GM10248 (cell line): ENCODE measurements at regions of chr17 and their contacts with region 1.

Region 1: GRCh38 chr17:45021607-45022287 is 29.7 kb downstream of the DCAKD start:
- DNase-seq: peak; percentile 91
- CTCF ChIP-seq: peak; percentile 79

Region 2: GRCh38 chr17:44919885-44920564 is 101.7 kb before region 1 on chr17:
- CTCF ChIA-PET with region 1: interaction called, 196 read pairs
- POLR2A ChIA-PET with region 1: no interaction called
- DNase-seq: peak; percentile 90
- CTCF ChIP-seq: peak; percentile 92

Region 3: DNA sequence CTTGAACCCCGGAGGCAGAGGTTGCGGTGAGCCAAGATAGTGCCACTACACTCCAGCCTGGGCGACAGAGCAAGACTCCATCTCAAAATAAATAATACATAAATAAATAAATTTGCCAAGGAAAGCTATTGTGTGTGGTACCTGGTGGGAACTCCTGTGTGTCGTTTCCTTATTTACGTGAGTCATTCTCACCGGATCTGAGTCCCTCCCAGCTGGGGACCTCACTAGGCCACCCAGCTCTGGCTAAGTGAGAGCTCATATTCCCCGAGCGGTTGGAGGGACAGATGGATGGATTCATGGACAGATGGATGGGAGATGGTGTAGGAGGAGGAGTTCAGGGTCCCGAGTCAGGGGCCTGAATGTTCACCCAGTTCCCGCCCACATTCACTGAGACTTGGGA is 30.8 kb before region 1 on chr17:
- CTCF ChIA-PET with region 1: interaction called, 10 read pairs
- POLR2A ChIA-PET with region 1: no interaction called
- DNase-seq: no peak
- CTCF ChIP-seq: no peak

Region 4: DNA sequence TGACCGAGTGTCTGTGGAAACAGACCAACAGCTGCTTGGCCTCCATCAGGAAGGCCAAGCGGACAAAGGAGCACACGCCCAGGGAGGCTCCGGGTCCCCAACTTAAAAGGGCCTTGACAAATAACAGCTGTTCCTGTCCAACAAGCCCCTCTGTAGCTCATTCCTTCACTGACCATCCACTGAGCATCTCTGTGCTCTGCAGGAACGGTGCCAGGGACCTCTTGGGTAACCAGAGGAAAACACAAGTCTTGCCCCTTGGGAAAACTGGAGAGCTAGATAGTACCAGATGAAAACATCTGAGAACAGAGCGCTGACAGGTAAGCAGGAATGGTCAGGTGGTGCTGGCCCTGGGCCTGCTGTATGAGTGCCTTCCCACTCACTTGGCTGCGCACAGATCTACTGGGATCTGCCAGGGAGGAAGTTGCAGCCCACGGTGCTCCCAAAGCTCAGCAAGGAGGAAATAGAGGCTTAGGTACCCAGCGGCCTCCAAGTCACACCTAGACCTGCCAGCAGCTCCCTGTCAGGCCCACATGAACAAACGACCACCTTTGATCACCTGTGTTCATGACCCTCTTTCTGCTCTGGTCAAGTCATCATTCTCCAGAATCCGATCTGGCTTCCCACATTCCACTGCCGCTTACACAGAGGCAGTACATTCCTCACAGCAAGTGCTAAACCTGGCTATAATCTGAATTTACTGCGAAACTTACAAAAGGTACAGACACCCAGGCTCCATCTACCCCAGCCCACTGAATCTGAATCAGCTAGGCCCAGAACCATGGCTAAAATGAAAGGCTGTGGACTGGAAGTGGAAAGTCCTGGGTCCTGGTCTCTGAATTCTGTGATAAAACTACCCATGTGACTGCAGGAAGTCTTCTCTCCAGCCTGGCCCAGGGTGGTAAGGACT is 17.2 kb after region 1 on chr17:
- CTCF ChIA-PET with region 1: interaction called, 27 read pairs
- POLR2A ChIA-PET with region 1: no interaction called
- DNase-seq: no peak
- CTCF ChIP-seq: no peak

Region 5: GRCh38 chr17:45073414-45074070 is 51.8 kb after region 1 on chr17:
- CTCF ChIA-PET with region 1: no interaction called
- POLR2A ChIA-PET with region 1: interaction called, 10 read pairs
- DNase-seq: no peak
- CTCF ChIP-seq: no peak